Right ventricle myocardium inferior (tissue), 1 donor: ENCODE measurements at regions of chr5 and their contacts with region 1.

Region 1: GRCh38 chr5:80255732-80256479 is at the start of gene SERINC5:
- DNase-seq: peak; percentile 94
- ATAC-seq: peak; percentile 93
- total RNA-seq, gene SERINC5: 14.5 TPM

Region 2: DNA sequence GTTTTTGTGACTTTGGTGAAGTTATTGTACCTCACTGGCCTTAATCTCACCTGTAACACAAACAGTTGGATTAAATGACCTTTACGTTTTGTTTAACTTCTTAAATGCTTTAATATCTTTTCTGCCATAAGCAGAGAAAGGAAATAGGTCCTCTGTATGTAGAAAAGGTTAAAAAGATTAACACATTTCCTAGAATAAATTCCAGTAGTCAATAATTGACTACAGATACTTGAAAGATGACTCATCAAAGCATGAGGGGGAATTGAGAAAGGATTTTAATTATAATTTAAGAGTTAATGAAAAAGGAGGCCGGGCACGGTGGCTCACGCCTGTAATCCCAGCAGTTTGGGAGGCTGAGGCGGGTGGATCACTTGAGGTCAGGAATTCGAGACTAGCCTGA is 602.1 kb before region 1 on chr5:
- intact Hi-C with region 1: no loop called
- DNase-seq: no peak
- ATAC-seq: no peak

Region 3: DNA sequence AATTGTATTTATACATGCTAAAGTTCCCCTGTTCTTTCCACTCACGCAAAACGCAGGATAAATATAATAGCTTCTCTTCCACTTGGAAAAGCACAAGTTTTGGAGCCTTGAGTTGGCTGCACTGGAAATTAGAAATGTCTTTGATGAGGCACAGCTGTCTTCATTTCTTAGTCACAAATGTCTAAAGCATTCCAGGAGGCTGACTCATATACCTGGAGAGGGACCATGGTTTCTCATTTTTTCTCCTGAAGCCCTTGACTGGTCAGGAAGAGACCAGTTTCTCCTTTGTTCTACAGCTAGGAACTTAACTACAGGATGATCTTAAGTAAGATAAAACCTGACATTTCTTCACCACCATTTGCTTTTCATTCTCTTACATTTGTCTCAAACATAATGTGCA is 281.0 kb before region 1 on chr5:
- intact Hi-C with region 1: no loop called
- DNase-seq: no peak
- ATAC-seq: no peak

Region 4: GRCh38 chr5:80109646-80110478 is 146.0 kb before region 1 on chr5:
- intact Hi-C with region 1: loop called (anchors 5 kb)
- DNase-seq: no peak
- ATAC-seq: peak; percentile 93

Region 5: DNA sequence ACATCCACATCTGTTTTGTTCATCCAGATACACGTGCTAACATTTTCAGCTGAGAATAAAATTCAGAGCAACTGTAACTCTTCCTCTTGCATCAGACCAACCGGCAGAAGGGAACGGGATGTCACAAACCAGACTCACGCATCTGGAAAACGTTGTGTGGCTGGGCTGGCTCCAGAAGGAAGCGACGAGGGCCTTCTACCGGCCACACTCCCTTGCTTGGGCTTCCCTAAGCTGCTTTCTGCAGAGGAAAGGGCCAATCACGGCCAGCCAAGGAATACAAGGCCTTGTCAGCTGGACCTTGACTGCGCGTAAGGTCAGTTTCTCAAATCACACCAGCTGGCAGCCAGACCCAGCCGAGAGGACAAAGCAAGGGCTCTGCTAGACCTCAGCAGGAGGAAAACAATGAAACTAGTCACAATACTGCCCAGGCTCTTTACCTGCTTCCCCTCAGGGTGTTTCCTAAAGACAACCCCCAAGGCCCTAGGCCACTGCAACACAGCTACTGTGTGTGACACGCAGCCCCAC is 114.7 kb before region 1 on chr5:
- intact Hi-C with region 1: loop called (anchors 2 kb)
- DNase-seq: peak; percentile 94
- ATAC-seq: peak; percentile 98

Region 6: GRCh38 chr5:80302636-80303035 is 46.7 kb after region 1 on chr5:
- intact Hi-C with region 1: no loop called
- DNase-seq: no peak
- ATAC-seq: no peak

Region 7: GRCh38 chr5:80466669-80467485 is 211.0 kb after region 1 on chr5:
- intact Hi-C with region 1: no loop called
- DNase-seq: no peak
- ATAC-seq: no peak